ENCODE measurements at regions of chr1 and their contacts with region 1.

Region 1: GRCh38 chr1:66331657-66332547 is 202.1 kb upstream of the SGIP1 start:
- DNase-seq: peak; percentile 82
- H3K4me3 ChIP-seq: peak overlapping the region; percentile 28 to 54 (median 48)
- H3K27ac ChIP-seq: peak overlapping the region; percentile 75 to 89 (median 83)
- H3K4me1 ChIP-seq: peaks cover 0 to 46% (median 34%) of the 10 kb centered on the region in 4 donors
- H3K27me3 ChIP-seq: no peaks in the 10 kb centered on the region
- CTCF ChIP-seq: peak in 3 of 4 experiments; percentile 25 to 57 (median 29)
- EP300 ChIP-seq: peak; percentile 3 to 80 (median 78)
- POLR2A ChIP-seq: peak in 1 of 2 donors; percentile 46

Region 2: GRCh38 chr1:66197785-66198184 is 134.1 kb before region 1 on chr1:
- intact Hi-C with region 1: no loop called
- DNase-seq: no peak
- H3K4me3 ChIP-seq: no peak overlapping the region
- H3K27ac ChIP-seq: peak overlapping the region in 2 of 4 donors; percentile 10 to 47
- H3K4me1 ChIP-seq: peaks cover 0 to 20% (median 9%) of the 10 kb centered on the region in 4 donors
- H3K27me3 ChIP-seq: no peaks in the 10 kb centered on the region
- CTCF ChIP-seq: no peak
- EP300 ChIP-seq: peak in 1 of 4 donors; percentile 23
- POLR2A ChIP-seq: no peak

Region 3: DNA sequence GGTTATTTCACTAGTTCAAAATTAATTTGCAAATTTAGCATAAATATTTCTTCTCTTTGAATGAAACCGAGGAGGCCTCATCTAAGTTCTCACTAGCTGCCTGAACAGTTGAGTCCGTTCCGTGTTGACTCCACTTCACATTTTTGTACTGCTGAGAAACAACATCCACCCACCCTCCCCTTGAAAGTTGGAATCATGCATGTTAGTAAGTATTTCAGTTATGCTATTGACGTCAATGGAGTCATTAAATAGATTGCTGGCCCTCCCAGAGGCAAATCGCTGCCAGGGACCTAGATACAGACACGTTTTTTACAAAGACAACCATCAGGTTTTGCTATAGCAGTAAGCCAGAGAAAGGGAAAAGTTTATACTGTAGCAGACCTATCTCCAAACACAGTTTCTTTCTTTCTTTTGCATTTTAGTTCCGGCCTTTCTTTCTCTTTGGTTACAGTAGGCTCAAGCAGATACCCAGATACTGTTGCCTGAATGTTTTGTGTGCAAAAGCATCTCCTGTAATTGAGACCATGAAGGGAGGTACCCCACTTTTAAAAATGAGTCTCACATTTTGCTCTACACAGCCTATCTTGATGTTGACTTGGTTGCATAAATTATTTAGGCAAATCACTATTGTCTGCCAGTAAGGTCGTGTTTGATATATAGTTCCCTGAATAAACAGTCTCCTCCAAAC is 60.5 kb before region 1 on chr1:
- intact Hi-C with region 1: loop called (anchors 1 kb)
- DNase-seq: peak; percentile 96
- H3K4me3 ChIP-seq: peak overlapping the region in 3 of 4 donors; percentile 7 to 31 (median 26)
- H3K27ac ChIP-seq: peak overlapping the region; percentile 79 to 87 (median 85)
- H3K4me1 ChIP-seq: peaks cover 0 to 69% (median 39%) of the 10 kb centered on the region in 4 donors
- H3K27me3 ChIP-seq: no peaks in the 10 kb centered on the region
- CTCF ChIP-seq: no peak
- EP300 ChIP-seq: peak; percentile 88 to 99 (median 98)
- POLR2A ChIP-seq: no peak

Measured in sigmoid colon (tissue), 7 donors.